IMR-90 (cell line): ENCODE measurements at regions of chr14 and their contacts with region 1.

Region 1: DNA sequence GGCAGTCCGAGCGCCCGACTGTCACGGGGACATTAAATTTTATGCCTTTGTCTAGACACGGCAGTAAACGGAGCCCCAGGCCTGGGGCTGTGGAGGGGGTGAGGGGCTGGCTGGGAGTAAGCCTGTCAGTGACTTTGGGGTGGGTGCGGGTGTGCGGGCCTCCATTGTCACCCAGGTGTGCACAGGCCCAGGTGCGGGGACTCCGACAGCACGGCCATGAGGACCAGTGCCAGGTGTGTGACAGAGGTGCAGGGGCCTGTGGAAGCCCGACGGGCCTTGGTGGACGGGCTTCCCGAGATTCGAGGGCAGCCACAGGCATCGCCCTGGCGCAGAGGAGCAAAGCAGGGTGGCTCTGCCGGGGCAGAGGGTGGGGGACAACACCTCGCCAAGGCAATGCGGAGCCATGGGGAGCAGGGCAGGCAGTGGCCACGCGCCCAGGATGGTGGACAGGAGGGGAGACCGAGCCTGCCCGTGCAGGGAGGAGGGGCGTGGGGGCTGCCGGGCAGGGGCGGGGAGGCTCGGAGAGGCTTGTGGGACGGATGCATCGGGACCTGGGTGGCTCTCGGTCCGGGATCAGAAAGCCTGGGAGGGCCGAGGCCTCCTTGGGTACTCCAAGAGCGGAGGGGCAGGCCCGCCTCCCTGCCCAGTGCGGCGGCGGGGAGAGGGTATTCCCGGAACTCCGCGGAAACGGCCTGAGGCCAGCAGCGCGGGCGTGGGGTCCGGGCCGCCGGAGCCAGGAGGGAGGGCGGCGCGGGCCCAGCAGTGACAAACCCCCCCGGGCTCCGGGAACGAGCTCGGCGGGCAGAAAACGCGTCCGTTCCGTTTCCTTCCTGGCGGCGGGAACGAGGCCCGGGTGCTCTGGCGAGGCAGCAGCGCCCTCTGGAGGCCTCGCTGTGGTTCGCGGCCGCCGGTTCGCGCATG is 1.5 kb downstream of the TMEM121 start:
- DNase-seq: peak; percentile 62
- ATAC-seq: peak; percentile 83
- H3K4me3 ChIP-seq: peak overlapping the region; percentile 57
- H3K27ac ChIP-seq: peak overlapping the region; percentile 17; the same call in 1 of the 2 replicates
- H3K4me1 ChIP-seq: peaks cover 9% of the 10 kb centered on the region; the same call in 1 of the 2 replicates
- H3K27me3 ChIP-seq: no peaks in the 10 kb centered on the region; the same call in 1 of the 2 replicates
- CTCF ChIP-seq: peak; percentile 94
- POLR2A ChIP-seq: peak; percentile 42; the same call in 1 of the 2 replicates
- RAD21 ChIP-seq: peak; percentile 88

Region 2: DNA sequence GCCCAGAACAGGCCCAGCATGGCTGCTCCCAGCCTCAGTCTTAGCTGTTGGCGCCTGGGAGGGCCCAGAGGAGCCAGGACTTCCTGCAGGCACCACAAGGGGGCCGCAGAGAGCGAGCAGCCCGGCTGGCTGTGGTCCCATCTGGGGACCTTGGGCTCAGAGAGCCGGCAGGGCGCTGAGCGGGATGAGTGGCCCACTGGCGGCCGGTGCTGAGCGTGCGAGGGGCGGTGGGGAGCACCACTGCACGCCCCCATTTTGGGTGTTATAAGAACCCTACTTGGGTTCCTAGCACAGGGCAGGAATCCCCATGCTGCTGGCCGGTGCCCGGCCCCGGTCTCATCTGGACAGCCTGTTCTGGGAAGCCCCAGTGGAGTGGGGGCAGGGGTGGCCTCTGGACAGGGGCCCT is 79.2 kb before region 1 on chr14:
- CTCF ChIA-PET with region 1: no interaction called
- POLR2A ChIA-PET with region 1: no interaction called
- dilution Hi-C with region 1: no loop called
- in situ Hi-C with region 1: no loop called
- intact Hi-C with region 1: loop called (anchors 1 kb)
- DNase-seq: peak; percentile 47
- ATAC-seq: peak; percentile 98
- H3K4me3 ChIP-seq: no peak overlapping the region
- H3K27ac ChIP-seq: no peak overlapping the region
- H3K4me1 ChIP-seq: no peaks in the 10 kb centered on the region
- H3K27me3 ChIP-seq: no peaks in the 10 kb centered on the region
- CTCF ChIP-seq: peak; percentile 84
- POLR2A ChIP-seq: no peak
- RAD21 ChIP-seq: peak; percentile 71

Region 3: GRCh38 chr14:105480952-105481801 is 46.7 kb before region 1 on chr14:
- CTCF ChIA-PET with region 1: interaction called, 4 read pairs
- POLR2A ChIA-PET with region 1: no interaction called
- dilution Hi-C with region 1: no loop called
- in situ Hi-C with region 1: no loop called
- intact Hi-C with region 1: loop called (anchors 2 kb)
- DNase-seq: peak; percentile 81
- ATAC-seq: peak; percentile 78
- H3K4me3 ChIP-seq: peak overlapping the region; percentile 39
- H3K27ac ChIP-seq: peak overlapping the region; percentile 68
- H3K4me1 ChIP-seq: peaks cover 23% of the 10 kb centered on the region
- H3K27me3 ChIP-seq: peaks cover 9% of the 10 kb centered on the region; the same call in 1 of the 2 replicates
- CTCF ChIP-seq: peak; percentile 99
- POLR2A ChIP-seq: peak; percentile 78
- RAD21 ChIP-seq: peak; percentile 73

Region 4: GRCh38 chr14:105490572-105491366 is 37.2 kb before region 1 on chr14 and contains the start of gene TEDC1:
- CTCF ChIA-PET with region 1: no interaction called
- POLR2A ChIA-PET with region 1: no interaction called
- dilution Hi-C with region 1: no loop called
- in situ Hi-C with region 1: no loop called
- intact Hi-C with region 1: loop called (anchors 5 kb)
- DNase-seq: peak; percentile 100
- ATAC-seq: peak; percentile 86
- H3K4me3 ChIP-seq: peak within 1 kb of the TSS; percentile 61
- H3K27ac ChIP-seq: peak within 1 kb of the TSS; percentile 35; the same call in 1 of the 2 replicates
- H3K4me1 ChIP-seq: peaks cover 2% of the 10 kb centered on the region; the same call in 1 of the 2 replicates
- H3K27me3 ChIP-seq: peaks cover 20% of the 10 kb centered on the region; the same call in 1 of the 2 replicates
- CTCF ChIP-seq: peak; percentile 98
- POLR2A ChIP-seq: no peak
- RAD21 ChIP-seq: peak; percentile 87
- total RNA-seq, gene TEDC1: 4.2 and 5.7 TPM in 2 replicates

Region 5: GRCh38 chr14:105601360-105602237 is 73.7 kb after region 1 on chr14:
- CTCF ChIA-PET with region 1: no interaction called
- POLR2A ChIA-PET with region 1: no interaction called
- dilution Hi-C with region 1: no loop called
- in situ Hi-C with region 1: no loop called
- intact Hi-C with region 1: no loop called
- DNase-seq: no peak
- ATAC-seq: no peak
- H3K4me3 ChIP-seq: no peak overlapping the region
- H3K27ac ChIP-seq: no peak overlapping the region
- H3K4me1 ChIP-seq: no peaks in the 10 kb centered on the region
- H3K27me3 ChIP-seq: no peaks in the 10 kb centered on the region
- CTCF ChIP-seq: no peak
- POLR2A ChIP-seq: no peak
- RAD21 ChIP-seq: no peak